CD8-positive, alpha-beta T cell (primary cell): ENCODE measurements at regions of chr5 and their contacts with region 1.

Region 1: GRCh38 chr5:10283927-10284635 is 23.6 kb downstream of the CMBL start:
- DNase-seq: peak; percentile 59 to 86 (median 78)
- ATAC-seq: peak; percentile 96
- H3K4me3 ChIP-seq: no peak overlapping the region
- H3K4me3 Mint-ChIP-seq: no peak overlapping the region
- H3K27ac ChIP-seq: no peak overlapping the region
- H3K27ac Mint-ChIP-seq: no peak overlapping the region
- H3K4me1 ChIP-seq: no peaks in the 10 kb centered on the region
- H3K4me1 Mint-ChIP-seq: peaks cover 6% of the 10 kb centered on the region
- H3K27me3 ChIP-seq: no peaks in the 10 kb centered on the region
- H3K27me3 Mint-ChIP-seq: peaks cover 8% of the 10 kb centered on the region
- CTCF ChIP-seq: peak; percentile 89

Region 2: GRCh38 chr5:10364186-10364683 is 80.2 kb after region 1 on chr5:
- CTCF ChIA-PET with region 1: interaction called, 11 read pairs
- POLR2A ChIA-PET with region 1: no interaction called
- intact Hi-C with region 1: loop called (anchors 1 kb)
- DNase-seq: peak in 2 of 9 experiments; percentile 47 to 58
- ATAC-seq: peak; percentile 68
- H3K4me3 ChIP-seq: no peak overlapping the region
- H3K4me3 Mint-ChIP-seq: no peak overlapping the region
- H3K27ac ChIP-seq: no peak overlapping the region
- H3K27ac Mint-ChIP-seq: peak overlapping the region; percentile 10
- H3K4me1 ChIP-seq: peaks cover 31% of the 10 kb centered on the region
- H3K4me1 Mint-ChIP-seq: peaks cover 79% of the 10 kb centered on the region
- H3K27me3 ChIP-seq: no peaks in the 10 kb centered on the region
- H3K27me3 Mint-ChIP-seq: no peaks in the 10 kb centered on the region
- CTCF ChIP-seq: no peak

Region 3: DNA sequence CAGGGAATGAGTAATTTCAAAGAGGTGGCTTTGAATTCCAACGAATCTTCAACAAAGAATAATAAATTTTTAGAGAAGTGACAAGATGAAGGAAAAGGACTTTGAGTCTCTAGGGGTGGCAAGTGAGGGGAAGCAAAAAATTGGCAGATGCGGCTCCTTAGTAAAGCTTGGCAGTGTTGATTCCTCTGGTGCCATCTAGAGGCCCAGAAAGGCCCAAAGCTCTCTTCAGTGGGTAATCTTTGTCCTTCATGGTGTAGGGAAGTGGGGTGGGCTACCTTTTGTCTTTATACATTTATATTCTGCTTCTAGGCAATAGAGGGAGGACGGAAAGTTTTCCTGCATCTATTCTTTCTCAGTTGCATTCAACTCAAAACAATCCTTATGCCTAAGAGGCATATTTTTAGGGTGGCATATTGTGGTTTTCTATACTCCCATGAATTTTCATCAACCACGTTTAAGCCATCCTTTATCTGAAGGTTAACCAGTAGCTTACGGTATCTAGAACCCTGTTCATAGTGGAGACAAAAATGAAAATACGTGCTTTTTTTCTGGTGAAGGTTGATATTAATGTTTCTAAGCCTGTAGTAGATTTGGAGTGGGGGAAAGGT is 140.1 kb after region 1 on chr5:
- CTCF ChIA-PET with region 1: interaction called, 21 read pairs
- POLR2A ChIA-PET with region 1: no interaction called
- intact Hi-C with region 1: loop called (anchors 1 kb)
- DNase-seq: peak in 3 of 9 experiments; percentile 28 to 54 (median 33)
- ATAC-seq: peak; percentile 59
- H3K4me3 ChIP-seq: no peak overlapping the region
- H3K4me3 Mint-ChIP-seq: no peak overlapping the region
- H3K27ac ChIP-seq: no peak overlapping the region
- H3K27ac Mint-ChIP-seq: peak overlapping the region; percentile 21
- H3K4me1 ChIP-seq: peaks cover 11% of the 10 kb centered on the region
- H3K4me1 Mint-ChIP-seq: peaks cover 22% of the 10 kb centered on the region
- H3K27me3 ChIP-seq: no peaks in the 10 kb centered on the region
- H3K27me3 Mint-ChIP-seq: no peaks in the 10 kb centered on the region
- CTCF ChIP-seq: peak; percentile 41

Region 4: GRCh38 chr5:10441083-10441991 is 157.3 kb after region 1 on chr5 and contains the start of gene ROPN1L:
- CTCF ChIA-PET with region 1: interaction called, 4 read pairs
- POLR2A ChIA-PET with region 1: no interaction called
- intact Hi-C with region 1: loop called in 1 of 2 experiments (anchors 5 kb)
- DNase-seq: peak; percentile 50 to 88 (median 75)
- ATAC-seq: peak; percentile 94
- H3K4me3 ChIP-seq: peak within 1 kb of the TSS; percentile 76 to 88
- H3K4me3 Mint-ChIP-seq: peak within 1 kb of the TSS; percentile 84
- H3K27ac ChIP-seq: peak within 1 kb of the TSS; percentile 41 to 56
- H3K27ac Mint-ChIP-seq: peak within 1 kb of the TSS; percentile 38
- H3K4me1 ChIP-seq: peaks cover 41% of the 10 kb centered on the region
- H3K4me1 Mint-ChIP-seq: peaks cover 41% of the 10 kb centered on the region
- H3K27me3 ChIP-seq: no peaks in the 10 kb centered on the region
- H3K27me3 Mint-ChIP-seq: no peaks in the 10 kb centered on the region
- CTCF ChIP-seq: no peak
- total RNA-seq, gene ROPN1L: not detected

Region 5: GRCh38 chr5:10466446-10467073 is 182.5 kb after region 1 on chr5:
- CTCF ChIA-PET with region 1: no interaction called
- POLR2A ChIA-PET with region 1: no interaction called
- intact Hi-C with region 1: no loop called
- DNase-seq: no peak
- ATAC-seq: no peak
- H3K4me3 ChIP-seq: no peak overlapping the region
- H3K4me3 Mint-ChIP-seq: no peak overlapping the region
- H3K27ac ChIP-seq: no peak overlapping the region
- H3K27ac Mint-ChIP-seq: no peak overlapping the region
- H3K4me1 ChIP-seq: no peaks in the 10 kb centered on the region
- H3K4me1 Mint-ChIP-seq: peaks cover 6% of the 10 kb centered on the region
- H3K27me3 ChIP-seq: no peaks in the 10 kb centered on the region
- H3K27me3 Mint-ChIP-seq: no peaks in the 10 kb centered on the region
- CTCF ChIP-seq: no peak

Region 6: GRCh38 chr5:10627160-10627701 is 343.1 kb after region 1 on chr5:
- CTCF ChIA-PET with region 1: interaction called, 68 read pairs
- POLR2A ChIA-PET with region 1: no interaction called
- intact Hi-C with region 1: loop called (anchors 1 kb)
- DNase-seq: peak in 1 of 9 experiments; percentile 21
- ATAC-seq: no peak
- H3K4me3 ChIP-seq: peak overlapping the region; percentile 33 to 61
- H3K4me3 Mint-ChIP-seq: peak overlapping the region; percentile 82
- H3K27ac ChIP-seq: no peak overlapping the region
- H3K27ac Mint-ChIP-seq: peak overlapping the region; percentile 61
- H3K4me1 ChIP-seq: peaks cover 7% of the 10 kb centered on the region
- H3K4me1 Mint-ChIP-seq: peaks cover 17% of the 10 kb centered on the region
- H3K27me3 ChIP-seq: no peaks in the 10 kb centered on the region
- H3K27me3 Mint-ChIP-seq: no peaks in the 10 kb centered on the region
- CTCF ChIP-seq: no peak

Region 7: GRCh38 chr5:10635257-10635866 is 351.3 kb after region 1 on chr5:
- CTCF ChIA-PET with region 1: interaction called, 11 read pairs
- POLR2A ChIA-PET with region 1: no interaction called
- intact Hi-C with region 1: no loop called
- DNase-seq: peak in 7 of 9 experiments; percentile 10 to 64 (median 49)
- ATAC-seq: peak; percentile 79
- H3K4me3 ChIP-seq: no peak overlapping the region
- H3K4me3 Mint-ChIP-seq: no peak overlapping the region
- H3K27ac ChIP-seq: no peak overlapping the region
- H3K27ac Mint-ChIP-seq: peak overlapping the region; percentile 43
- H3K4me1 ChIP-seq: peaks cover 16% of the 10 kb centered on the region
- H3K4me1 Mint-ChIP-seq: peaks cover 33% of the 10 kb centered on the region
- H3K27me3 ChIP-seq: no peaks in the 10 kb centered on the region
- H3K27me3 Mint-ChIP-seq: no peaks in the 10 kb centered on the region
- CTCF ChIP-seq: no peak

Region 8: GRCh38 chr5:10746711-10747110 is 462.6 kb after region 1 on chr5:
- CTCF ChIA-PET with region 1: no interaction called
- POLR2A ChIA-PET with region 1: no interaction called
- intact Hi-C with region 1: no loop called
- DNase-seq: no peak
- ATAC-seq: no peak
- H3K4me3 ChIP-seq: no peak overlapping the region
- H3K4me3 Mint-ChIP-seq: no peak overlapping the region
- H3K27ac ChIP-seq: no peak overlapping the region
- H3K27ac Mint-ChIP-seq: no peak overlapping the region
- H3K4me1 ChIP-seq: no peaks in the 10 kb centered on the region
- H3K4me1 Mint-ChIP-seq: peaks cover 3% of the 10 kb centered on the region
- H3K27me3 ChIP-seq: no peaks in the 10 kb centered on the region
- H3K27me3 Mint-ChIP-seq: no peaks in the 10 kb centered on the region
- CTCF ChIP-seq: no peak